ENCODE measurements at regions of chr6 and their contacts with region 1.

Region 1: DNA sequence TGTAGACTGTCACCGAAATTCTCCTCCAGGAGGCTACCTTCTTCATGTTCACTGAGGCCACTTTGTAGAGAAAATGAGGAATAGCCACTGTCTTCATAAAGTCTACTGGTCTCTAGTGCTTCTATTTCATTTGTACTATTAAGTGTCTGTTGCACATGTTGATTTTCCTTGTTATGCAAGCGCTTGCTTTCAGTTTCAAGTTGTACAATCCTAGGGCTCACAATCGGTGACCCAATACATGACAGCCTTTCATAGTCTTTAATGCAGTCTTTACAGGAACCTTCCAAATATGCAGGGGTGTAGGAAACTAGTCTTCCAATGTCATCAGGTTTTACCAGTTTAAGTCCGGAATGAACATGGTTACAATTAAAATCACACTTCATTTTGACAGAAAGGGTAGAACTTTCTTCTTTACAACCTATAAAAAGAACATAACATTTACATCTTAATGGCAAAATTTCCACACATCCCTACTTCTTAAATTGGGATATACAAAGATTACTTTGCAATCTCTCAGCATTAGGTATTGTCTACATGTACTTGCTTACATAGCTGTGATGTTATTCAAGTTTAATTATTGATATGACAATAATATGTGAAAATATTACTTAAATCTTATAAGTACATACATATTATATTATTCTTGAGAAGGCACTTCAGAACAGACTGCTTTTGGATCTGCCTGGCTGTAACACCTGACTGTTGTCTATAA is 7.5 kb downstream of the FBXO5 start:
- DNase-seq: no peak
- ATAC-seq: peak; percentile 76
- H3K4me3 ChIP-seq: peak overlapping the region; percentile 25
- H3K27ac ChIP-seq: no peak overlapping the region
- H3K4me1 ChIP-seq: peaks cover 4% of the 10 kb centered on the region; the same call in 1 of the 2 replicates
- H3K27me3 ChIP-seq: no peaks in the 10 kb centered on the region
- CTCF ChIP-seq: no peak
- EP300 ChIP-seq: no peak
- POLR2A ChIP-seq: no peak
- RAD21 ChIP-seq: no peak

Region 2: GRCh38 chr6:152301764-152302568 is 673.4 kb before region 1 on chr6:
- CTCF ChIA-PET with region 1: no interaction called
- POLR2A ChIA-PET with region 1: no interaction called
- RAD21 ChIA-PET with region 1: no interaction called
- SMC1A ChIA-PET with region 1: no interaction called
- in situ Hi-C with region 1: no loop called
- intact Hi-C with region 1: loop called (anchors 10 kb)
- DNase-seq: peak; percentile 74
- ATAC-seq: peak; percentile 92
- H3K4me3 ChIP-seq: peak overlapping the region; percentile 72
- H3K27ac ChIP-seq: peak overlapping the region; percentile 84
- H3K4me1 ChIP-seq: peaks cover 6% of the 10 kb centered on the region
- H3K27me3 ChIP-seq: no peaks in the 10 kb centered on the region
- CTCF ChIP-seq: peak; percentile 51 to 56 (median 53)
- EP300 ChIP-seq: no peak; a peak in 2 of 4 replicates
- POLR2A ChIP-seq: peak; percentile 92
- RAD21 ChIP-seq: peak; percentile 50

Region 3: DNA sequence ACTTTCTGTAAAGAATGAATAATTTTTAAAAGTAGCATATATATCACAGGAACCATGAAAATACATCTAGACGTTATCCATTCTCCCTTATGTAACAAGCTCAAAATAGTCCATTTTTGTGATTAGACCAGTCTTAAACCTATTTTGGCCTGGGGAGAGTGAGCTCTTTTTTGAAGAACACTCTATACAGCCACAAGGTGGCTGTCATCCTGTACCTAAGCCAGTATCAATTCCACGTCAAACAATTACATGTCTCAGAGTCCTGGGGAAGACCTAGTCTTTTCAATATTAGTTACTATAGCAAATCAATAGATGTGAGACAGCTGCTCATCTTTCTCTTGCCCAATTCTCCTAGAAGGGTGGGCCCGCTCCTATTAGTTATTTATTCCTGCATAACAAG is 20.9 kb before region 1 on chr6:
- CTCF ChIA-PET with region 1: interaction called, 11 read pairs
- POLR2A ChIA-PET with region 1: no interaction called
- RAD21 ChIA-PET with region 1: interaction called, 6 read pairs
- SMC1A ChIA-PET with region 1: interaction called, 6 read pairs
- in situ Hi-C with region 1: no loop called
- intact Hi-C with region 1: no loop called
- DNase-seq: no peak
- ATAC-seq: peak; percentile 84
- H3K4me3 ChIP-seq: no peak overlapping the region
- H3K27ac ChIP-seq: no peak overlapping the region
- H3K4me1 ChIP-seq: no peaks in the 10 kb centered on the region
- H3K27me3 ChIP-seq: no peaks in the 10 kb centered on the region
- CTCF ChIP-seq: peak in 2 of 3 experiments; percentile 26 to 37; a peak in 2 of 6 replicates
- EP300 ChIP-seq: no peak
- POLR2A ChIP-seq: no peak
- RAD21 ChIP-seq: peak; percentile 45; the same call in 1 of the 2 replicates

Region 4: GRCh38 chr6:153002607-153003365 is 27.4 kb after region 1 on chr6 and contains the start of gene MTRF1L:
- CTCF ChIA-PET with region 1: interaction called, 5 read pairs
- POLR2A ChIA-PET with region 1: interaction called, 10 read pairs
- RAD21 ChIA-PET with region 1: interaction called, 5 read pairs
- SMC1A ChIA-PET with region 1: interaction called, 26 read pairs
- in situ Hi-C with region 1: no loop called
- intact Hi-C with region 1: no loop called
- DNase-seq: peak; percentile 82
- ATAC-seq: peak; percentile 96
- H3K4me3 ChIP-seq: peak within 1 kb of the TSS; percentile 84
- H3K27ac ChIP-seq: peak within 1 kb of the TSS; percentile 61
- H3K4me1 ChIP-seq: no peaks in the 10 kb centered on the region
- H3K27me3 ChIP-seq: no peaks in the 10 kb centered on the region
- CTCF ChIP-seq: no peak
- EP300 ChIP-seq: no peak
- POLR2A ChIP-seq: peak; percentile 66; the same call in 1 of the 2 replicates
- RAD21 ChIP-seq: no peak
- polyA plus RNA-seq, gene MTRF1L: 5.1 to 9.0 TPM

Region 5: GRCh38 chr6:153192943-153193885 is 217.9 kb after region 1 on chr6:
- CTCF ChIA-PET with region 1: no interaction called
- POLR2A ChIA-PET with region 1: no interaction called
- RAD21 ChIA-PET with region 1: no interaction called
- SMC1A ChIA-PET with region 1: no interaction called
- in situ Hi-C with region 1: no loop called
- intact Hi-C with region 1: no loop called
- DNase-seq: no peak
- ATAC-seq: no peak
- H3K4me3 ChIP-seq: no peak overlapping the region
- H3K27ac ChIP-seq: no peak overlapping the region
- H3K4me1 ChIP-seq: no peaks in the 10 kb centered on the region
- H3K27me3 ChIP-seq: no peaks in the 10 kb centered on the region
- CTCF ChIP-seq: no peak
- EP300 ChIP-seq: no peak
- POLR2A ChIP-seq: no peak
- RAD21 ChIP-seq: no peak

Measured in GM12878 (cell line).